ENCODE measurements at regions of chr1 and their contacts with region 1.

Region 1: DNA sequence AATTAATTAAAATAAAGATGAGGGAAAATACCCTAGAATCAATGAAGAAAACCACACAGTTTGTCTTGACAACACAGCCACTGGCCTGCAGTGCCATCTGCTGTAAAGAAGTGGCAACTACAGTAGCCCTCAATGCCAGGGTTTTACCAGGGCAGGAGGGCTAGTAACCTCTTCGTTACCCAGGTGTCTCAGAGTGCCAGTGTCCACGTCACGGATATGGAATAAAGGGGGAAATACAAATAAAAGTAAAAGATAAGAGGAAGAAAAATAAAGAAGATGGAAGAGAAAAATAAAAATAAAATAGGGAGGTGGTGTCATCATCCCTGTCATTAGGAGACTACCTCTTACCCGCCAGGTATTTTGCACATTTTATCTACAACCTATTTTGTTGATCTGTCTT is 14.2 kb upstream of the SLC44A3 start:
- DNase-seq: no peak
- ATAC-seq: peak; percentile 79
- H3K4me3 ChIP-seq: no peak overlapping the region
- H3K27ac ChIP-seq: no peak overlapping the region
- H3K4me1 ChIP-seq: no peaks in the 10 kb centered on the region
- H3K27me3 ChIP-seq: no peaks in the 10 kb centered on the region
- CTCF ChIP-seq: peak; percentile 80 to 92 (median 90)
- EP300 ChIP-seq: no peak
- POLR2A ChIP-seq: no peak
- RAD21 ChIP-seq: peak; percentile 98

Region 2: GRCh38 chr1:94061513-94062443 is 744.1 kb before region 1 on chr1:
- CTCF ChIA-PET with region 1: interaction called, 19 read pairs
- POLR2A ChIA-PET with region 1: no interaction called
- RAD21 ChIA-PET with region 1: interaction called, 3 read pairs
- SMC1A ChIA-PET with region 1: no interaction called
- in situ Hi-C with region 1: loop called (anchors 10 kb)
- intact Hi-C with region 1: loop called (anchors 5 kb)
- DNase-seq: no peak
- ATAC-seq: peak; percentile 95
- H3K4me3 ChIP-seq: no peak overlapping the region
- H3K27ac ChIP-seq: no peak overlapping the region
- H3K4me1 ChIP-seq: no peaks in the 10 kb centered on the region
- H3K27me3 ChIP-seq: no peaks in the 10 kb centered on the region; a peak in 1 of 4 replicates
- CTCF ChIP-seq: peak; percentile 84 to 89 (median 86)
- EP300 ChIP-seq: no peak
- POLR2A ChIP-seq: no peak
- RAD21 ChIP-seq: peak; percentile 73

Region 3: GRCh38 chr1:94471271-94471670 is 334.6 kb before region 1 on chr1:
- CTCF ChIA-PET with region 1: interaction called, 55 read pairs
- POLR2A ChIA-PET with region 1: no interaction called
- RAD21 ChIA-PET with region 1: interaction called, 9 read pairs
- SMC1A ChIA-PET with region 1: interaction called, 37 read pairs
- in situ Hi-C with region 1: loop called (anchors 5 kb)
- intact Hi-C with region 1: no loop called
- DNase-seq: no peak
- ATAC-seq: no peak
- H3K4me3 ChIP-seq: no peak overlapping the region
- H3K27ac ChIP-seq: no peak overlapping the region
- H3K4me1 ChIP-seq: no peaks in the 10 kb centered on the region
- H3K27me3 ChIP-seq: no peaks in the 10 kb centered on the region
- CTCF ChIP-seq: no peak
- EP300 ChIP-seq: no peak
- POLR2A ChIP-seq: no peak
- RAD21 ChIP-seq: no peak

Region 4: GRCh38 chr1:94501935-94502334 is 304.0 kb before region 1 on chr1:
- CTCF ChIA-PET with region 1: interaction called, 10 read pairs
- POLR2A ChIA-PET with region 1: no interaction called
- RAD21 ChIA-PET with region 1: interaction called, 4 read pairs
- SMC1A ChIA-PET with region 1: interaction called, 4 read pairs
- in situ Hi-C with region 1: no loop called
- intact Hi-C with region 1: no loop called
- DNase-seq: no peak
- ATAC-seq: no peak
- H3K4me3 ChIP-seq: no peak overlapping the region
- H3K27ac ChIP-seq: no peak overlapping the region
- H3K4me1 ChIP-seq: no peaks in the 10 kb centered on the region
- H3K27me3 ChIP-seq: no peaks in the 10 kb centered on the region
- CTCF ChIP-seq: no peak
- EP300 ChIP-seq: no peak
- POLR2A ChIP-seq: no peak
- RAD21 ChIP-seq: no peak

Region 5: GRCh38 chr1:94527447-94528031 is 278.4 kb before region 1 on chr1:
- CTCF ChIA-PET with region 1: interaction called, 127 read pairs
- POLR2A ChIA-PET with region 1: no interaction called
- RAD21 ChIA-PET with region 1: interaction called, 3 read pairs
- SMC1A ChIA-PET with region 1: interaction called, 4 read pairs
- in situ Hi-C with region 1: no loop called
- intact Hi-C with region 1: no loop called
- DNase-seq: no peak
- ATAC-seq: no peak; the same call in 2 of the 3 replicates
- H3K4me3 ChIP-seq: no peak overlapping the region
- H3K27ac ChIP-seq: no peak overlapping the region
- H3K4me1 ChIP-seq: no peaks in the 10 kb centered on the region
- H3K27me3 ChIP-seq: no peaks in the 10 kb centered on the region
- CTCF ChIP-seq: no peak
- EP300 ChIP-seq: no peak
- POLR2A ChIP-seq: no peak
- RAD21 ChIP-seq: no peak

Region 6: DNA sequence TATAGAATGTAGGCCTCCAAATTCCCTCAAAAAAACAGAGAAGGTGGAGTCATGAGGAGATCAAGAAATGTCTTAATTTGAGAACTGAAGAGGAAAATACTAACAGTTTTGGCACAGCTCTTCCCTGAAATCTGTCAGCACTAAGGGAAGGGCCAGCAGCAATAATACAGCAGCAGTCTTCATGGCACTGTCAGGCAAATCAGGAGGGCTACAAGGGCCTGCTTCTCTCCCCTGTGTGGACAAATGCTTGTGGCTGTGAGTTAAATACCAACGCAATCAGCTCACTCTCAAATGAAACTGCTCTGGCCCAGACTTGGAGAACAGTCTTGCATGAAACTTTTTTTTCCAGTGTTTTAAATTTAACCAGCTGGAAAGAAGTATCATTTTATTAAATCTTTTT is 141.5 kb after region 1 on chr1:
- CTCF ChIA-PET with region 1: no interaction called
- POLR2A ChIA-PET with region 1: no interaction called
- RAD21 ChIA-PET with region 1: no interaction called
- SMC1A ChIA-PET with region 1: no interaction called
- in situ Hi-C with region 1: no loop called
- intact Hi-C with region 1: no loop called
- DNase-seq: no peak
- ATAC-seq: no peak
- H3K4me3 ChIP-seq: no peak overlapping the region
- H3K27ac ChIP-seq: no peak overlapping the region
- H3K4me1 ChIP-seq: no peaks in the 10 kb centered on the region
- H3K27me3 ChIP-seq: no peaks in the 10 kb centered on the region; a peak in 1 of 4 replicates
- CTCF ChIP-seq: no peak
- EP300 ChIP-seq: no peak
- POLR2A ChIP-seq: no peak
- RAD21 ChIP-seq: no peak

Region 7: DNA sequence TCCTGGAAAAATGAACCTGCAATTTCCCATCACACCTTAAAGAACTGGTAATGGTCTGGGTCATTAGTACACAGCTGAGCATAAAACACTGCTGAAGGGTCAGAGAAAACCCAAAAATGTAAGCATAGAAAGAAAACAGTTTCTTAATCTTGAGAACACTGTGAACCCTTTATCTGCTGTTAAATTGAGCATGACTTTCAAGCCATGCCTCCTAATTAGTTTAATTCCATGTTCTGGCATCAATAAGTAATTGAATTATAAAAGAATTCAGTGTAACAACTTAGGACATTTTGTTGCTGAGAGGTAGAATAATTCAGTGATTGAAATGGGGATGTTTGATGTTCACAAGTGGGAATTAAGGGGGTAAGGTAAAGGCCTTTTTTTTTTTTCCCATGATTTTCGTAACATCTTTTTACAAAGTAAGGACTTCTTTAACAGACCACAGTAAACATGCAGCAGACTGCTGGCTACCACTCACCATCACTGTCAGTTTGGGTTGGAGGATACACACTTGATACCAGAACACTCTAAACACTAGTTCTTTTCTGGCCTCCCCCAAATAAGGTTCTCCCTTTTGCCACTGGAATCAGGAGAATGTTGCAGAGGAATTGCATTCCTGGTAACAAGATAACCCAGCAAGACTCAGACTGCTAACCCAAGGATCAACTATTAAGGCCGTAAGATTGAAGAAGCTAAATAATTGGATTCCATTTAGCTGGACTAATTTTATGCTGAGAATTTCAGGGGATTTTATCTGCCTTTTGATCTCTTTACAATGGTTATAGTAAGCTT is 431.1 kb after region 1 on chr1:
- CTCF ChIA-PET with region 1: no interaction called
- POLR2A ChIA-PET with region 1: no interaction called
- RAD21 ChIA-PET with region 1: no interaction called
- SMC1A ChIA-PET with region 1: no interaction called
- in situ Hi-C with region 1: no loop called
- intact Hi-C with region 1: no loop called
- DNase-seq: no peak
- ATAC-seq: no peak
- H3K4me3 ChIP-seq: no peak overlapping the region
- H3K27ac ChIP-seq: no peak overlapping the region
- H3K4me1 ChIP-seq: peaks cover 4% of the 10 kb centered on the region; the same call in 1 of the 2 replicates
- H3K27me3 ChIP-seq: peaks cover 0 to 3% of the 10 kb centered on the region in 2 experiments; a peak in 2 of 4 replicates
- CTCF ChIP-seq: no peak
- EP300 ChIP-seq: no peak
- POLR2A ChIP-seq: no peak
- RAD21 ChIP-seq: no peak

Measured in GM12878 (cell line).